Astrocyte of the cerebellum (primary cell): ENCODE measurements at regions of chr11 and their contacts with region 1.

Region 1: GRCh38 chr11:765025-765801 is 12.1 kb downstream of the GATD1 start:
- DNase-seq: no peak
- H3K4me3 ChIP-seq: no peak overlapping the region
- CTCF ChIP-seq: peak; percentile 50

Region 2: DNA sequence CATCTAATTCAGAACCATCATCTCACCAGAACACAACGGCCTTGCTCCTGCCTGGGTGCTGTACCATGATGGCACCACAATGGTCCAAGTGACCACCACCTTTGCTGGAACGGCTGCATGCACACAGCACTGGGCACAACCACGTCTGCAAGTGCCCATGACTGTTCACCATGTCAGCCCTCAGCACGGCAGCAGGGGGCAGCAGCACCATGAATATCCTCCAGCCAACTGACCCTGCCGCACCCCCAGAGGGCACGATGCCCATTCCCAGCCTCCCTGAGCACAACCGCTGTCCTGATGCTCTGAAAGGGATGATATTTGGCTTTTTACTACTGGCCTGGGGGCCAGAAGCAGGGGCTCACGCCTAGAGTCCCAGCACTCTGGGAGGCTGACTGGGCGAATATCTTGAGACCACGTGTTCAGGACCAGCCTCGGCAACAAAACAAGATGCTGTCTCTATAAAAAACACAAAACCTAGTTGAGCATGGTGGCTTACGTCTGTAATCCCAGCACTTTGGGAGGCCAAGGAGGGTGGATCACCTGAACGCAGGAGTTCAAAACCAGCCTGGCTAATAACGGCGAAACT is 102.4 kb before region 1 on chr11:
- in situ Hi-C with region 1: loop called (anchors 25 kb)
- DNase-seq: peak; percentile 18
- H3K4me3 ChIP-seq: no peak overlapping the region
- CTCF ChIP-seq: peak; percentile 68

Region 3: GRCh38 chr11:727859-728748 is 37.1 kb before region 1 on chr11:
- in situ Hi-C with region 1: no loop called
- DNase-seq: peak; percentile 66
- H3K4me3 ChIP-seq: no peak overlapping the region
- CTCF ChIP-seq: peak; percentile 98

Region 4: GRCh38 chr11:830295-831117 is 65.3 kb after region 1 on chr11:
- in situ Hi-C with region 1: no loop called
- DNase-seq: no peak
- H3K4me3 ChIP-seq: peak overlapping the region; percentile 30
- CTCF ChIP-seq: no peak